HepG2 (cell line): ENCODE measurements at regions of chr5 and their contacts with region 1.

Region 1: DNA sequence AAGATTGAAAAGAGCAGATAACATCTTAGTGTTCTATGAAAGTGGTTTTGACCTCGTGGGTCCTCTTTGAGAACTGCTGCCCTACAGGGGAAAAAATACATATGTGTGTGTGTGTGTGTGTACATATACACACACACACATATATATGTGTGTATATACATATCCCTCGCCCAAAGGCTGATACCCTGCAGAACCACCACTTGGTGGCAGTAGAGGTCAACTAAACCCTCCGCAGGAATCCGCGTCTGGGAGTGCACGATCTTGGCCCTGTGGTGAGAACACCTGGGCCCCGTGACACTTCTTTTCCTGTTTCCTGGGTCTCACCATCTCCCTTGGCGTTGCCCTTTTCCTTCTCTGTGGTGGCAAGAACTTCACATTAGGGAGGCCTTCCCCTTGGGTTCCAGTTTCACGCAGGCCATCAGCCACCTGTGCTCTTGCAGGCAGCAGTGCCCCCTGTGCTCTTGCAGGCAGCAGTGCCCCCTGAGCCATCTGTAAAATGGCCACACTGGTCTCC is 8.2 kb downstream of the IL9 start:
- DNase-seq: peak; percentile 73
- ATAC-seq: peak; percentile 95
- H3K4me3 ChIP-seq: peak overlapping the region; percentile 32 to 61 (median 40); a peak in 4 of 6 replicates
- H3K27ac ChIP-seq: no peak overlapping the region
- H3K4me1 ChIP-seq: peaks cover 10% of the 10 kb centered on the region
- H3K27me3 ChIP-seq: peaks cover 0 to 5% of the 10 kb centered on the region in 2 experiments; a peak in 2 of 5 replicates
- CTCF ChIP-seq: peak; percentile 93
- EP300 ChIP-seq: no peak
- POLR2A ChIP-seq: no peak
- RAD21 ChIP-seq: peak; percentile 95

Region 2: GRCh38 chr5:135433681-135434426 is 453.6 kb before region 1 on chr5:
- CTCF ChIA-PET with region 1: no interaction called
- POLR2A ChIA-PET with region 1: no interaction called
- in situ Hi-C with region 1: no loop called
- intact Hi-C with region 1: no loop called
- DNase-seq: peak; percentile 58
- ATAC-seq: peak; percentile 91
- H3K4me3 ChIP-seq: peak overlapping the region; percentile 24 to 66 (median 61)
- H3K27ac ChIP-seq: peak overlapping the region; percentile 45
- H3K4me1 ChIP-seq: peaks cover 69% of the 10 kb centered on the region
- H3K27me3 ChIP-seq: peaks cover 0 to 7% of the 10 kb centered on the region in 2 experiments; a peak in 1 of 5 replicates
- CTCF ChIP-seq: no peak
- EP300 ChIP-seq: no peak
- POLR2A ChIP-seq: peak; percentile 61 to 66
- RAD21 ChIP-seq: no peak

Region 3: GRCh38 chr5:135821061-135821801 is 66.2 kb before region 1 on chr5:
- CTCF ChIA-PET with region 1: no interaction called
- POLR2A ChIA-PET with region 1: no interaction called
- in situ Hi-C with region 1: no loop called
- intact Hi-C with region 1: no loop called
- DNase-seq: no peak
- ATAC-seq: no peak
- H3K4me3 ChIP-seq: no peak overlapping the region
- H3K27ac ChIP-seq: no peak overlapping the region
- H3K4me1 ChIP-seq: no peaks in the 10 kb centered on the region
- H3K27me3 ChIP-seq: peaks cover 0 to 24% of the 10 kb centered on the region in 2 experiments; a peak in 4 of 5 replicates
- CTCF ChIP-seq: no peak
- EP300 ChIP-seq: no peak
- POLR2A ChIP-seq: no peak
- RAD21 ChIP-seq: no peak

Region 4: GRCh38 chr5:135986891-135987401 is 99.5 kb after region 1 on chr5:
- CTCF ChIA-PET with region 1: interaction called, 7 read pairs
- POLR2A ChIA-PET with region 1: interaction called, 3 read pairs
- in situ Hi-C with region 1: no loop called
- intact Hi-C with region 1: loop called (anchors 1 kb)
- DNase-seq: no peak
- ATAC-seq: no peak
- H3K4me3 ChIP-seq: no peak overlapping the region
- H3K27ac ChIP-seq: no peak overlapping the region
- H3K4me1 ChIP-seq: peaks cover 10% of the 10 kb centered on the region
- H3K27me3 ChIP-seq: no peaks in the 10 kb centered on the region
- CTCF ChIP-seq: no peak
- EP300 ChIP-seq: no peak
- POLR2A ChIP-seq: no peak
- RAD21 ChIP-seq: no peak

Region 5: GRCh38 chr5:136080483-136081216 is 193.2 kb after region 1 on chr5:
- CTCF ChIA-PET with region 1: interaction called, 23 read pairs
- POLR2A ChIA-PET with region 1: no interaction called
- in situ Hi-C with region 1: loop called (anchors 5 kb)
- intact Hi-C with region 1: loop called (anchors 1 kb)
- DNase-seq: no peak
- ATAC-seq: no peak
- H3K4me3 ChIP-seq: no peak overlapping the region
- H3K27ac ChIP-seq: no peak overlapping the region
- H3K4me1 ChIP-seq: peaks cover 29% of the 10 kb centered on the region
- H3K27me3 ChIP-seq: no peaks in the 10 kb centered on the region
- CTCF ChIP-seq: no peak
- EP300 ChIP-seq: no peak
- POLR2A ChIP-seq: no peak
- RAD21 ChIP-seq: no peak

Region 6: GRCh38 chr5:136212252-136212721 is 324.9 kb after region 1 on chr5:
- CTCF ChIA-PET with region 1: interaction called, 19 read pairs
- POLR2A ChIA-PET with region 1: no interaction called
- in situ Hi-C with region 1: loop called (anchors 5 kb)
- intact Hi-C with region 1: loop called (anchors 1 kb)
- DNase-seq: peak; percentile 21
- ATAC-seq: peak; percentile 63
- H3K4me3 ChIP-seq: no peak overlapping the region
- H3K27ac ChIP-seq: no peak overlapping the region
- H3K4me1 ChIP-seq: no peaks in the 10 kb centered on the region
- H3K27me3 ChIP-seq: peaks cover 0 to 44% of the 10 kb centered on the region in 2 experiments; a peak in 3 of 5 replicates
- CTCF ChIP-seq: peak; percentile 90
- EP300 ChIP-seq: no peak
- POLR2A ChIP-seq: no peak
- RAD21 ChIP-seq: peak; percentile 76